Transverse colon (tissue), 4 donors: ENCODE measurements at regions of chr17 and their contacts with region 1.

Region 1: GRCh38 chr17:68812876-68813584 is 142.2 kb downstream of the ABCA8 start:
- DNase-seq: no peak
- H3K4me3 ChIP-seq: no peak overlapping the region
- H3K27ac ChIP-seq: peak overlapping the region in 1 of 4 donors; percentile 15
- H3K4me1 ChIP-seq: no peaks in the 10 kb centered on the region
- H3K27me3 ChIP-seq: no peaks in the 10 kb centered on the region
- CTCF ChIP-seq: no peak
- EP300 ChIP-seq: no peak
- POLR2A ChIP-seq: no peak

Region 2: DNA sequence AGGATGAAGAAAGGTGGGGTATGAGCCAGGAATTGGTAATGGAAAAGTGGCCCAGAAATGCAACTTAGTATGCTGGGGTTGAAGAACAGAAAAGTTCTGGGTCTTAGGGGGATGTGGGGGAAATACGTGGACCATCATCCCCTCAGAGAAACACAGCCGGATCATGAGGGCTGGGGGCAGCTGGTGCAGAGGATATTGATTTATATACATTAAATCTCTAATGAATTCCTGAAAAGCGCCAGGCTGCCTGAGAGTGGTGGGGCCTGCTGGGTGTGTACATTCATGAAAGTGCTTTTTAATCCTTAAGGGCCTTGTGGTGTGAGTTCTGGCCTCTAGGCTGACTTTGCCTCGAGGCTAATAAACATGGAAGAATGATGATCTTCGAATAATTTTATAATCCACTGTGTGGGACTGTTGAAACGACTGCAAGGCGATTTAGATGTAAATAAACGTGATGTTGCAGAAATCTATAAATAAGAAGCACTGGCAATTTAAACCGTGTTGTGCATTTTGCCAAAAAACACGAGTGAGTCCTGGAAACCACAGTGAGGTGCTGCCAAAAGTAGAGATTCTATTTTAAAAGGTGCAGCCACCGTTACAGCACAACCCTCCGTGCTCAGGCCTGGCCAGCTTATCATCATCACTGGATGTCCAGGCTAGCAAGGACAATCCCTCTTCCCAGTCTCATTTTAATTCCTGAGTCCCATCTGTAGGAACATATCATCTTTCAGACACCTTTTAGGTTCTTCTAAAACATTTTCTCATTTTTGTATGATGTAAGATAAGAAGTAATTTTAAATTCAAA is 268.7 kb before region 1 on chr17:
- in situ Hi-C with region 1: no loop called
- intact Hi-C with region 1: no loop called
- DNase-seq: no peak
- H3K4me3 ChIP-seq: no peak overlapping the region
- H3K27ac ChIP-seq: no peak overlapping the region
- H3K4me1 ChIP-seq: no peaks in the 10 kb centered on the region
- H3K27me3 ChIP-seq: no peaks in the 10 kb centered on the region
- CTCF ChIP-seq: no peak
- EP300 ChIP-seq: no peak
- POLR2A ChIP-seq: no peak

Region 3: GRCh38 chr17:68861602-68862001 is 48.6 kb after region 1 on chr17:
- in situ Hi-C with region 1: no loop called
- intact Hi-C with region 1: no loop called
- DNase-seq: no peak
- H3K4me3 ChIP-seq: no peak overlapping the region
- H3K27ac ChIP-seq: peak overlapping the region in 1 of 4 donors; percentile 24
- H3K4me1 ChIP-seq: no peaks in the 10 kb centered on the region
- H3K27me3 ChIP-seq: no peaks in the 10 kb centered on the region
- CTCF ChIP-seq: no peak
- EP300 ChIP-seq: no peak
- POLR2A ChIP-seq: no peak

Region 4: GRCh38 chr17:68993112-68993511 is 180.1 kb after region 1 on chr17:
- in situ Hi-C with region 1: no loop called
- intact Hi-C with region 1: no loop called
- DNase-seq: no peak
- H3K4me3 ChIP-seq: no peak overlapping the region
- H3K27ac ChIP-seq: no peak overlapping the region
- H3K4me1 ChIP-seq: no peaks in the 10 kb centered on the region
- H3K27me3 ChIP-seq: no peaks in the 10 kb centered on the region
- CTCF ChIP-seq: no peak
- EP300 ChIP-seq: no peak
- POLR2A ChIP-seq: no peak

Region 5: DNA sequence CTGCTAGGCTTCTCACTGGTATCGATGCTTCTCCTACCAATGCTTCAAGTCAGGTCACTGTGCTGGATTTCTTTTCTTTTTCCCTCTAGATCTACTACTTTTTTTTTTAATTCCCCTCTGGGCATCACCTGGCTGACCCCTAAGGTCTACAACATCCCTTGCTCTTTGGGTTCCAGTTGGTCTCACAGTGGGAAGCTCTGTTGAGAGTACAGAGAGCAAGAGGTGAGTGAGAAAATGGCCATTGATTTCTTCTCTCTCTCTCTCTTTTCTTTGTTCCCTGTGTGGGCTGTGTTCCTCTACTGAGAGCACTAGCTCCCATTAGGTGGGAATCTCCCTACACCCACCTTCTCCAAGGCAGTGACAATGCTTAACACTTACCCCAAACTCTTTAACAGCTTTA is 1769.7 kb after region 1 on chr17:
- in situ Hi-C with region 1: no loop called
- intact Hi-C with region 1: loop called (anchors 5 kb)
- DNase-seq: no peak
- H3K4me3 ChIP-seq: no peak overlapping the region
- H3K27ac ChIP-seq: no peak overlapping the region
- H3K4me1 ChIP-seq: no peaks in the 10 kb centered on the region
- H3K27me3 ChIP-seq: no peaks in the 10 kb centered on the region
- CTCF ChIP-seq: no peak
- EP300 ChIP-seq: no peak
- POLR2A ChIP-seq: no peak